ENCODE measurements at regions of chr3 and their contacts with region 1.

Region 1: GRCh38 chr3:99499235-99500158 is 138.9 kb upstream of the COL8A1 start:
- DNase-seq: peak; percentile 32 to 62 (median 40)
- ATAC-seq: peak; percentile 65 to 74
- H3K4me3 ChIP-seq: no peak overlapping the region
- H3K27ac ChIP-seq: no peak overlapping the region
- H3K4me1 ChIP-seq: no peaks in the 10 kb centered on the region
- H3K27me3 ChIP-seq: no peaks in the 10 kb centered on the region

Region 2: DNA sequence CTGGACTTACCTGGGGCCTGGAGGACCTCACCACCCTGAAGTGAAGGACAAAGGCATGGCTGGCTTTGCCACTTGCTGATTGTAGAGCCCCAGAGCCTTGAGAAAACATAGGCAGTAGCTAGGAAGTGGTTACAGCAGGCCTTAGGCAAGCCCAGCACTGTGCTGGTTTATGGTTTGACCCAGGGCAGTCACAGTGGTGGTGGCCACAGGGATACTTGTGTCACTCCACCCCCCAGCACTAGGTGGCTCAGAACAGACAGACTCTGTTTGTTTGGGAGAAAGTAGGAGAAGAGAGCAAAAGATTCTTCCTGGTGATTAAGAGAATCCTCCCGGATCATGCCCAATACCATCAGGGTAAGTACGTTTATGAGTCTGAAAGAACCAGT is 125.7 kb after region 1 on chr3:
- intact Hi-C with region 1: no loop called
- DNase-seq: no peak
- ATAC-seq: peak in 1 of 2 donors; percentile 28
- H3K4me3 ChIP-seq: no peak overlapping the region
- H3K27ac ChIP-seq: no peak overlapping the region
- H3K4me1 ChIP-seq: no peaks in the 10 kb centered on the region
- H3K27me3 ChIP-seq: no peaks in the 10 kb centered on the region

Region 3: GRCh38 chr3:99686955-99687612 is 187.6 kb after region 1 on chr3:
- intact Hi-C with region 1: loop called in 2 of 4 experiments (anchors 10 kb)
- DNase-seq: peak; percentile 60 to 85 (median 74)
- ATAC-seq: peak; percentile 43 to 69
- H3K4me3 ChIP-seq: no peak overlapping the region
- H3K27ac ChIP-seq: no peak overlapping the region
- H3K4me1 ChIP-seq: no peaks in the 10 kb centered on the region
- H3K27me3 ChIP-seq: no peaks in the 10 kb centered on the region

Region 4: GRCh38 chr3:99753268-99753975 is 253.9 kb after region 1 on chr3:
- intact Hi-C with region 1: loop called in 1 of 4 experiments (anchors 10 kb)
- DNase-seq: peak in 1 of 3 donors; percentile 28
- ATAC-seq: peak; percentile 86 to 89
- H3K4me3 ChIP-seq: no peak overlapping the region
- H3K27ac ChIP-seq: no peak overlapping the region
- H3K4me1 ChIP-seq: peaks cover 4% of the 10 kb centered on the region
- H3K27me3 ChIP-seq: no peaks in the 10 kb centered on the region

Region 5: GRCh38 chr3:99765042-99765942 is 265.8 kb after region 1 on chr3:
- intact Hi-C with region 1: loop called in 1 of 4 experiments (anchors 10 kb)
- DNase-seq: no peak
- ATAC-seq: peak in 1 of 2 donors; percentile 46
- H3K4me3 ChIP-seq: no peak overlapping the region
- H3K27ac ChIP-seq: no peak overlapping the region
- H3K4me1 ChIP-seq: no peaks in the 10 kb centered on the region
- H3K27me3 ChIP-seq: no peaks in the 10 kb centered on the region

Region 6: GRCh38 chr3:99866261-99866761 is 366.8 kb after region 1 on chr3:
- intact Hi-C with region 1: no loop called
- DNase-seq: no peak
- ATAC-seq: no peak
- H3K4me3 ChIP-seq: no peak overlapping the region
- H3K27ac ChIP-seq: no peak overlapping the region
- H3K4me1 ChIP-seq: peaks cover 10% of the 10 kb centered on the region
- H3K27me3 ChIP-seq: no peaks in the 10 kb centered on the region

Region 7: DNA sequence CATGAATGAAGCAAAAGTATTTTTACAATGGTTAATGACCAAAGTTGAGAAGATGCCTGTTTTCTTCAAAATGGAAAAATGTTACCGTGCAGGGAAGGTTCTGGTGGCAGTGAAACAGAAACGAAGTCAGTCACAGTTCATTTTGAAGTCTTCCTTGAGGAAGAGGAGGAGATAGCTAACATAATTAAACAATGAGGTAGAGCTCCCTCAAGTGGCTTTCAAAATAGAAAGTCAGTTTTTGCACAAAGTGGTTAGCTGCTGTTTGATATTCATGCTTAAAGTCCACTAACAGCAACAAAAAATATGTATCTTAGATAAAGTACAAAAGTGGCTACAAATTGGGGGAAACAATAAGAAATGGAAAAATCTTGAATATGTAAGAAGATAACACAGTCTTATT is 1297.1 kb after region 1 on chr3:
- intact Hi-C with region 1: no loop called
- DNase-seq: no peak
- ATAC-seq: peak; percentile 31 to 36
- H3K4me3 ChIP-seq: no peak overlapping the region
- H3K27ac ChIP-seq: no peak overlapping the region
- H3K4me1 ChIP-seq: no peaks in the 10 kb centered on the region
- H3K27me3 ChIP-seq: no peaks in the 10 kb centered on the region

Measured in right cardiac atrium (tissue), 5 donors.